ENCODE measurements at regions of chr11 and their contacts with region 1.

Region 1: DNA sequence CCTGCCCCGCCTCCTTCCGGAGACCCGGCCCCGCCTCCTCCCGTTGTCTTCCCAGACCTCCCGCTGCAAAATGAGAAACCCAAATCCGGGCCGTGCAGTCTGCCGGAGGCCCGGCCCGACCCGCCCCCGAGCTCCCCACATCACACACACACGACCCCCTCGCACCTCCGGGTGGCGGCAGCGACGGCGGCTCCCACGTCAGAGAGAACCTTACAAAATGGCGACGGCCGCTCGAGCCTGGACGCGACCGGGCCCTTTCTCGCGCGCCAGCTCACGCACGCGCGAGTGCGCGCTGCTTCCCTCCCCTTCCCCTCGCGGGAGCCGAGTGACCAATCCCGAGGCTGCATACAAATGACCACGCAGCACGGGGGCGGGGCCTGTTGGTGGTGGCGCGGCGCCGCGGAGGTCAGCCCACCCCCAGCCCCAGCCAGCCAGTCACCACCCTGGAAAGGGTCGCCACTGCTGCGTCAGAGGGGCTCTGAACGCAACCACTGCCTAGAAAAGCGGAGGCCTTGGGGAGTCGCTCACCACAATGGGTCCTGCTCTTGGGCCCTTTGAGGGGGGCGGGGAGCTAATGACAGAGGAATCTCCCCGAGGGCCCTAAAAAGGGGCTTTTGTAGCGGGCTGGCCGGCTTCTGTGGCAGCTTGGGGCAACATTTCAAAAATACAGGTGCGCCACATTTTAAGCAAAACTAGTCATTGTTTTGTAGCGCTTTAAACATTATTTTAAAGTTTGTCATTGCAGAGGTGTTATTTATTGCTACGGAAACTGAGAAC is at the start of gene RBM4B:
- DNase-seq: peak; percentile 97
- H3K4me3 Mint-ChIP-seq: peak within 1 kb of the TSS; percentile 93
- H3K27ac Mint-ChIP-seq: peak within 1 kb of the TSS; percentile 99
- H3K4me1 Mint-ChIP-seq: peaks cover 38% of the 10 kb centered on the region
- H3K27me3 Mint-ChIP-seq: no peaks in the 10 kb centered on the region
- total RNA-seq, gene RBM4B: 18.1 to 20.4 TPM

Region 2: GRCh38 chr11:66408488-66409214 is 269.1 kb before region 1 on chr11:
- CTCF ChIA-PET with region 1: interaction called, 25 read pairs
- POLR2A ChIA-PET with region 1: no interaction called
- DNase-seq: peak; percentile 93
- H3K4me3 Mint-ChIP-seq: peak overlapping the region; percentile 63
- H3K27ac Mint-ChIP-seq: no peak overlapping the region
- H3K4me1 Mint-ChIP-seq: peaks cover 3% of the 10 kb centered on the region
- H3K27me3 Mint-ChIP-seq: peaks cover 17% of the 10 kb centered on the region

Region 3: DNA sequence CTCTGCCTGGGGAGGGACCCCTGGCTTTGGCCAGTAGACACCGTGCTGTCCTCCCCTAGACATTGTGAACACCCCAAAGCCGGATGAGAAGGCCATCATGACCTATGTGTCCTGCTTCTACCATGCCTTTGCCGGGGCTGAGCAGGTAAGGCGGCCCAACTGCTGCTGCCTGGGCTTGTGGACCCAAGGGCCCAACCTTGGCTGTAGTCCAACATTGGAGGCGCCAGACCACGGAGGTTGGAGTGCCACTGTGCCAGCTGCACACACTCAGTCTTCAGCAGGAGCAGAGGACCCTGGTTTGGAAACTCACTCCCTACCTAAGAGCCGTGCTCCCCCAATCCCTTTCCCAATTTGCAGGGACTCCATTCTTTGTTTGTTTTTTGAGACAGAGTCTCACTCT is 121.7 kb before region 1 on chr11:
- CTCF ChIA-PET with region 1: interaction called, 10 read pairs
- POLR2A ChIA-PET with region 1: no interaction called
- DNase-seq: no peak
- H3K4me3 Mint-ChIP-seq: no peak overlapping the region
- H3K27ac Mint-ChIP-seq: no peak overlapping the region
- H3K4me1 Mint-ChIP-seq: peaks cover 4% of the 10 kb centered on the region
- H3K27me3 Mint-ChIP-seq: peaks cover 7% of the 10 kb centered on the region

Region 4: GRCh38 chr11:66592457-66593302 is 85.1 kb before region 1 on chr11 and contains the starts of genes CCDC87 and CCS:
- CTCF ChIA-PET with region 1: interaction called, 14 read pairs
- POLR2A ChIA-PET with region 1: no interaction called
- DNase-seq: peak; percentile 99
- H3K4me3 Mint-ChIP-seq: peak within 1 kb of the TSS; percentile 98
- H3K27ac Mint-ChIP-seq: peak within 1 kb of the TSS; percentile 95
- H3K4me1 Mint-ChIP-seq: peaks cover 34% of the 10 kb centered on the region
- H3K27me3 Mint-ChIP-seq: no peaks in the 10 kb centered on the region
- total RNA-seq, gene CCDC87: 0.08 TPM in 1 of 2 experiments, not detected in the other
- total RNA-seq, gene CCS: 28.8 to 32.6 TPM

Region 5: GRCh38 chr11:66638177-66639065 is 39.4 kb before region 1 on chr11 and contains the start of gene RBM4:
- CTCF ChIA-PET with region 1: interaction called, 12 read pairs
- POLR2A ChIA-PET with region 1: no interaction called
- DNase-seq: peak; percentile 99
- H3K4me3 Mint-ChIP-seq: peak within 1 kb of the TSS; percentile 91
- H3K27ac Mint-ChIP-seq: peak within 1 kb of the TSS; percentile 96
- H3K4me1 Mint-ChIP-seq: peaks cover 63% of the 10 kb centered on the region
- H3K27me3 Mint-ChIP-seq: no peaks in the 10 kb centered on the region
- total RNA-seq, gene RBM4: 124 to 137 TPM

Region 6: DNA sequence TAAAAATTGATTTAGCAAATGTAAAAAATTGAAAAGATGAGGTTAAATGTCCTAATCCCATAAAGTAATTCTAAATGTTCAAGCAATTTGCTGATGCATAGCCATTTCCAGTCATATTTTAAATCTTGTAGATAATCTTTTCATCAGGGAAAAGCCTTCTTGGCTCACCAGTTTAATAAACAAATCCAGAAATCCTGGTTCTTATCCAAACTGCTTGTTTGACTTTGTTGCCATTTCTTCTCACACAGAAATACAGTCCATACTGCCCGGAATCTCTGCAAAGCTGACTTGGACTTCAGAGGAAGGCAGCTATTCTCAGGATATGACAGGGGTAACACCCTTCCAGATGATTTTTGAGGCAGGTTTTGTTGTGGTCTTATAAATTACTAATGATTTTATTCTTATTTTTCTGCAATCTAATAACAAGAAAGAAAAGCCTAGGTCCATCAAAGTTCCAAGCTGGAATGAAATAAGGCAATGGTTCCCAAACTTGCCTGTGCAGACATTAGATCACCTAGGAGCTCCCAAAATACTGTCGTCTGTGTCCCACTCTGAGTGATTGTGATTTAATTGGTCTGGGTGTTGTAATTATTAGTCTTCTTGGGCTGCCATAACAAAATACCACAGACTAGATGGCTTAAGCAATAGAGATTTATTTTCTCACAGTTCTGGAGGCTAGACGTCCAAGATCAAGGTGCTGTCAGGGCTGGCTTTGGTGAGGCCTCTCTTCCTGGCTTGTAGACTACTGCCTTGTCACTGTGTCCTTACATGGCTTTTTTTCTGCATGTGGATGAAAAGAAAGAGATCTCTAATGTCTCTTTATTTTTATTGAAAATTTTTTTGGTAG is 110.3 kb after region 1 on chr11:
- CTCF ChIA-PET with region 1: no interaction called
- POLR2A ChIA-PET with region 1: no interaction called
- DNase-seq: no peak
- H3K4me3 Mint-ChIP-seq: no peak overlapping the region
- H3K27ac Mint-ChIP-seq: no peak overlapping the region
- H3K4me1 Mint-ChIP-seq: no peaks in the 10 kb centered on the region
- H3K27me3 Mint-ChIP-seq: no peaks in the 10 kb centered on the region